ENCODE measurements at regions of chr17 and their contacts with region 1.

Region 1: GRCh38 chr17:59859444-59860025 is 33.2 kb downstream of the TUBD1 start:
- DNase-seq: no peak
- ATAC-seq: peak; percentile 84
- H3K4me3 ChIP-seq: no peak overlapping the region
- H3K27ac ChIP-seq: no peak overlapping the region
- H3K4me1 ChIP-seq: no peaks in the 10 kb centered on the region
- H3K27me3 ChIP-seq: no peaks in the 10 kb centered on the region
- CTCF ChIP-seq: peak; percentile 47 to 73 (median 48); a peak in 5 of 6 replicates
- EP300 ChIP-seq: no peak
- POLR2A ChIP-seq: no peak
- RAD21 ChIP-seq: peak; percentile 95

Region 2: GRCh38 chr17:59746849-59747445 is 112.6 kb before region 1 on chr17:
- CTCF ChIA-PET with region 1: interaction called, 4 read pairs
- POLR2A ChIA-PET with region 1: interaction called, 27 read pairs
- RAD21 ChIA-PET with region 1: no interaction called
- SMC1A ChIA-PET with region 1: interaction called, 3 read pairs
- in situ Hi-C with region 1: no loop called
- intact Hi-C with region 1: loop called (anchors 1 kb)
- DNase-seq: no peak
- ATAC-seq: peak; percentile 83
- H3K4me3 ChIP-seq: no peak overlapping the region
- H3K27ac ChIP-seq: no peak overlapping the region
- H3K4me1 ChIP-seq: peaks cover 4% of the 10 kb centered on the region
- H3K27me3 ChIP-seq: no peaks in the 10 kb centered on the region
- CTCF ChIP-seq: peak; percentile 47 to 65 (median 61)
- EP300 ChIP-seq: no peak
- POLR2A ChIP-seq: no peak
- RAD21 ChIP-seq: peak; percentile 82

Region 3: DNA sequence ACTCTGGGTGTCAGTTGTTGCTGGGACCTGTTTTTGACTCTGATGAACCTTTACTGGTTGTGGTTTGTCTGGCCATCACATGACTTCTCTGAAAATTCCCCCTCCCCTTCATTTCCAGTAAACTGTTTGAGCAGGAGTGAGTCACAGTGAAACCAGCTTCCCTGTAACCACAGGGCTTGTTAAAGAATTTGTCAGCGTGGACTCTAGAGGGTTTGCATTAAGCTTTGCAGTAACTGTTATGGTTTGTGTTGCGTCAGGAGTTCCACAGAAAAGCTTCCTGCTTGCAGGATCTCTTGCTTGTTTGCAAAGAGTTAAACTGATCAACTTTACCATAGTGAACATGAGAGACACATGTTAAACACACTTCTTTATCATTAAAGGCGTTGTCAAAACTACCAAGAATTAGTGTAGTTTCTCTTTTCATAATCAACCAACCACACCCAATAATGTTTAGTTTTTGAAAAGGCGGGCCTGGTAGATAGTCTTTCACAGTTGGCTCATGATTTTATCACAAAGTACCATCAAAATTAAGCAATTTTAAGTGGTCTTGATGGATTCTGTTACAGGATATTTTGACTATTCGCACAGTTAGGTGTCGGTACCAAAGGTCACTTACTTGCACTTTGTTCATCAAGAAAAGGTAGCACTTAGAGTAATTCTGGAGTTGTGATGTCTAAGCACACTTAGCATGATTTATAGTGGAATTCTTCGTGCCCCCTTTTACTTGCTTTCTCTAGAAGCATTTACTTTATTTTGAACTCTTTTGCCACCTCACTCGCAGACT is 72.8 kb before region 1 on chr17:
- CTCF ChIA-PET with region 1: interaction called, 25 read pairs
- POLR2A ChIA-PET with region 1: interaction called, 10 read pairs
- RAD21 ChIA-PET with region 1: interaction called, 24 read pairs
- SMC1A ChIA-PET with region 1: interaction called, 5 read pairs
- in situ Hi-C with region 1: no loop called
- intact Hi-C with region 1: no loop called
- DNase-seq: peak; percentile 100
- ATAC-seq: peak; percentile 87
- H3K4me3 ChIP-seq: peak overlapping the region; percentile 20; the same call in 1 of the 2 replicates
- H3K27ac ChIP-seq: peak overlapping the region; percentile 95
- H3K4me1 ChIP-seq: peaks cover 24% of the 10 kb centered on the region
- H3K27me3 ChIP-seq: no peaks in the 10 kb centered on the region
- CTCF ChIP-seq: no peak; a peak in 1 of 6 replicates
- EP300 ChIP-seq: peak; percentile 98 to 99
- POLR2A ChIP-seq: 0 out of 2 replicates have a peak, but pooled peaks have one; percentile 25
- RAD21 ChIP-seq: peak; percentile 33; the same call in 1 of the 2 replicates

Region 4: DNA sequence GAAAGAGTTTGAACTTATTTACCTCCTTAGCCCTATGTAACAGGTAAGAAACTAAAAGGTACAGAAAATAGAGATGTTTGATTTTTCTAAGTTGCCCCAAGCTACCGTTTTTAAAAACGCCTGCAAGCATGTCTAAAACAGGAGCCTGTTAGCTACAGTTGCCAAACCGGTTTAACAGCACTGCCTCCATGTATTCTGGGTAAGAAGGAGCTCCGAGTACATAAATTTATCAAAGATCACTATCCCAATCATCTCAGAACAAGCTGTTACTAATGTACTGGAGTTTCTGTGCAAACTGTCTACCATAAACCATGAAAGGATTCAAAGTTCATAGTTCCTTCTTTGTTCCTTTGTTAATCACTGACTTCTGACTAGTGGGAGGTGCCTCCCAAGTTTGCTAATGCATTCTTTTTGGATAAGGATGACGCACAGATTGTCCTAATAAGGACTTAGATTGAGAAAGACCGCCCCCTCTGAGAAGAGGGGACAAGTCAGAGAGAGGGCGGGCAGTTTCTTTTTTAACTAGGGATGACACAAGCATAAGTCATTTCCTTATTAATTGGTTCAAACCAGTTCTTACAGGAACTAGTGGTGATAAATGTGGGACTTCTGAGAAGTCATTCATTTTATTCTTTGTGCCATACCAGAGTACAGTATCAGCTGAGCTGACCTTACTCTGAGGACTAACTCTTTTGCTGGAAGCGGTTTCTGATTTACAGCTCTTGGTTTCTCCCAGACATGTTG is 22.1 kb before region 1 on chr17:
- CTCF ChIA-PET with region 1: interaction called, 11 read pairs
- POLR2A ChIA-PET with region 1: interaction called, 9 read pairs
- RAD21 ChIA-PET with region 1: interaction called, 11 read pairs
- SMC1A ChIA-PET with region 1: interaction called, 10 read pairs
- in situ Hi-C with region 1: no loop called
- intact Hi-C with region 1: no loop called
- DNase-seq: peak; percentile 97
- ATAC-seq: peak; percentile 70
- H3K4me3 ChIP-seq: peak overlapping the region; percentile 91
- H3K27ac ChIP-seq: peak overlapping the region; percentile 97
- H3K4me1 ChIP-seq: peaks cover 35% of the 10 kb centered on the region
- H3K27me3 ChIP-seq: no peaks in the 10 kb centered on the region
- CTCF ChIP-seq: no peak
- EP300 ChIP-seq: peak in 1 of 2 experiments; percentile 70; a peak in 2 of 4 replicates
- POLR2A ChIP-seq: peak; percentile 94
- RAD21 ChIP-seq: no peak

Region 5: DNA sequence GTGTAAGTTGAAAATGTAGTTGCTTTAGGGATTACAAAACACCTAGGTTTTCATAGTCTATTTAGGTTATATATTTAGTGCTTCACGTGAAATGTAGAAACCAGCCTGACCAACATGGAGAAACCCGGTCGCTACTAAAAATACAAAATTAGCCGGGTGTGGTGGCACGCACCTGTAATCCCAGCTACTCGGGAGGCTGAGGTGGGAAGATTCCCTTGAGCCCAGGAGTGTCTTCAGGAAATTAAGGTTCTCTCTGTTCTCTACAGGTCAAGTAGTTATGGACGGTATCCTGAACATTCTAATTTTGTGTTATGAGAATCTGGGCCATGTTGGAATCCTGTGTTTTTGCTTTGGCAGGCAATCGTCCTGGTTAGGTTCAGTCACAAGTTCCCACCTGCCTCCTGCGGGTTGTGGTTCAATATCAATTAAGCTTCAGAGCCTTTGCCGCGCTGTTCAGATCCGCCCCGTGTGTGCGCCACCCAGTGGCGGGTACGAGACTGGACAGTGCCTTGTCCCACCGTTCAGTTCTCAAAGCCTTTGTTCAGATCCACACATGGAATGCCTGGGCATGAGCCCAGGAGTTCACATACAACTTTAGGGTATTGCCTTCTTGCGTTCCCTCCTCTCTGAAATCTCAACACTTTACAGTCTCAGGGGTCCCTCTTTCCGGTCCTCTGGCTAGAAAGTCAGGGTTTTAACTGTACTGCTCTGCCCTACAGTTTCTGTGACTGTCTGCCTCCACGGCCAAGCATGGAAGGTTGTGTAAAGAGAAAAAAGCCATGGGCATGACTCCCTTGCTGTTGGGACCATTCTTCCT is 177.5 kb after region 1 on chr17:
- CTCF ChIA-PET with region 1: interaction called, 11 read pairs
- POLR2A ChIA-PET with region 1: interaction called, 3 read pairs
- RAD21 ChIA-PET with region 1: interaction called, 3 read pairs
- SMC1A ChIA-PET with region 1: interaction called, 4 read pairs
- in situ Hi-C with region 1: no loop called
- intact Hi-C with region 1: no loop called
- DNase-seq: peak; percentile 12
- ATAC-seq: peak; percentile 98
- H3K4me3 ChIP-seq: no peak overlapping the region
- H3K27ac ChIP-seq: no peak overlapping the region
- H3K4me1 ChIP-seq: peaks cover 7% of the 10 kb centered on the region
- H3K27me3 ChIP-seq: peaks cover 0 to 3% of the 10 kb centered on the region in 2 experiments; a peak in 1 of 4 replicates
- CTCF ChIP-seq: peak; percentile 89 to 97 (median 97)
- EP300 ChIP-seq: no peak
- POLR2A ChIP-seq: no peak
- RAD21 ChIP-seq: peak; percentile 48; the same call in 1 of the 2 replicates